ENCODE measurements at regions of chr2 and their contacts with region 1.

Region 1: GRCh38 chr2:20650880-20651730 is at the start of gene HS1BP3:
- DNase-seq: peak; percentile 100
- H3K4me3 ChIP-seq: peak within 1 kb of the TSS; percentile 76 to 93
- H3K27ac ChIP-seq: peak within 1 kb of the TSS; percentile 48 to 91
- H3K4me1 ChIP-seq: peaks cover 13 to 18% of the 10 kb centered on the region in 2 experiments; a peak in 2 of 4 replicates
- H3K27me3 ChIP-seq: peaks cover 9% of the 10 kb centered on the region; the same call in 1 of the 2 replicates
- CTCF ChIP-seq: peak; percentile 66
- EP300 ChIP-seq: 0 out of 4 replicates have a peak, but pooled peaks of 1 of the 2 experiments have one; percentile 23
- RAD21 ChIP-seq: peak; percentile 59
- polyA plus RNA-seq, gene HS1BP3: 18.7 and 20.1 TPM in 2 replicates

Region 2: DNA sequence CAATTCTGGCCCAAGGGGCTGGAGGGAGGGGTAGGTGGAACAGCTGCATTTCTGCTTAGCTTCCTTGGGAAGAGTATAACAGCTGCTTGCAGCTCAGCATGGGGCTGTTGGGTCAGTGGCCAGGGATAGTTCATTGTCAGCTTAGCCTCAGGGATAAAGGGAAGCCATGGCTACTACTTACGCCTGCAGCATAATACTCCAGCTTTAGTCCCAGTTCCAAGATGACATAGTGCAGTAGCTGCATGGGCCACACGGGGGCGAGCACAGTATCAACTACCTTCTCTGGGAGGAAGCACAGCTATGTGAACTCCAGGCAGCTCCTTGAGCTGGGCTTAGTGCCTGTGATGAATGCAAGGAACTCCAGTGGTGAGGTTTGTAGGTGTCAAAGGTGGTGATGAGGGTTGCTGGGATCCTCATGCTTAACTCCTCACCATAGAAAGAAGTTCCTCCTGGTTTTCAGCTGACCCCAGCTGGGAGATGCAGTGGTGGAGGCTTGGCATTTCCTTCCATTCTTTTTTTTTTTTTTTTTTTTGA is 239.7 kb before region 1 on chr2:
- CTCF ChIA-PET with region 1: interaction called, 28 read pairs
- POLR2A ChIA-PET with region 1: no interaction called
- DNase-seq: peak; percentile 77
- H3K4me3 ChIP-seq: no peak overlapping the region
- H3K27ac ChIP-seq: no peak overlapping the region
- H3K4me1 ChIP-seq: no peaks in the 10 kb centered on the region
- H3K27me3 ChIP-seq: peaks cover 9% of the 10 kb centered on the region; the same call in 1 of the 2 replicates
- CTCF ChIP-seq: peak; percentile 87
- EP300 ChIP-seq: no peak
- RAD21 ChIP-seq: peak; percentile 70

Region 3: DNA sequence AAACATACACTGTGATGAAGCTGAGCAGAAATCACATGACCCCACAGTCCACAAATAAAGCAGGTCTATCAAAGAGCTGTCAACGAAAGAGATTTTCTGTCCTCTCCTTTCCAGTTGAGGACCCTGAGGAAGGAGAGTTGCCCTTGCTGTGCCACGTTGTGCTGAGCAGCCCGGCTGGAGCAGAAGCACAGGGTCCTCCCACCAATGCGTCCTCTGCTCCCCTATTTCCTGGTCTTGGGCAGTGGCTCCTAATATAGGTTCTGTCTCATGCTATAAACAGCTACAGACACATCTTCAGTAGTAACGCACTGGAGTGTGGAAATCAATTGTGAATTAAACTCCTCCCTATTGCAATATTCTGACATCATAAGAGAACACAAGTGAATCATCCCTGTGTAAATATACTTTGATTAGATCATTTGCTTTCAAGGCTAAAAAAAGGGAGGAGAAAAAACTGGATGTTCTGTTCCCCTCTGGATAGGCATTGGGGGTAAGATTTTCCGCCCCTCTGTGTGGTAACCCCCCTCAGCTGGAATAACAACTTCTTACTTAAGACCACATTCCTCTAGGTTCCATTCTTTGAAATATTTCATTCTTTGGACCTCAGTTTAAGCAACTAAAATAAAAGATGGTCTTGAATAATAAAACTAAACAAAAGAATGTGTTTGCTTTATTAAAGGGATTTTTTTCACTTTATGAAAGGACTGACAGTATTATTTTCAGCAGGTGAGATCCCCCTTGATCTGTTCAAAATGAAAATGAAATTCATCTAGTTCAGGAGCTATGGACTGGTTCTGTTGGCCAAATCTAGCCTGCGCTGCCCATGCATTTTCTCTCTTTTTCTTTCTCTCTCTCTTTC is 212.5 kb before region 1 on chr2:
- CTCF ChIA-PET with region 1: interaction called, 64 read pairs
- POLR2A ChIA-PET with region 1: no interaction called
- DNase-seq: no peak
- H3K4me3 ChIP-seq: no peak overlapping the region
- H3K27ac ChIP-seq: peak overlapping the region in 1 of 2 experiments; percentile 6; a peak in 1 of 4 replicates
- H3K4me1 ChIP-seq: peaks cover 2 to 6% of the 10 kb centered on the region in 2 experiments; a peak in 2 of 4 replicates
- H3K27me3 ChIP-seq: no peaks in the 10 kb centered on the region; the same call in 1 of the 2 replicates
- CTCF ChIP-seq: no peak
- EP300 ChIP-seq: no peak
- RAD21 ChIP-seq: no peak

Region 4: DNA sequence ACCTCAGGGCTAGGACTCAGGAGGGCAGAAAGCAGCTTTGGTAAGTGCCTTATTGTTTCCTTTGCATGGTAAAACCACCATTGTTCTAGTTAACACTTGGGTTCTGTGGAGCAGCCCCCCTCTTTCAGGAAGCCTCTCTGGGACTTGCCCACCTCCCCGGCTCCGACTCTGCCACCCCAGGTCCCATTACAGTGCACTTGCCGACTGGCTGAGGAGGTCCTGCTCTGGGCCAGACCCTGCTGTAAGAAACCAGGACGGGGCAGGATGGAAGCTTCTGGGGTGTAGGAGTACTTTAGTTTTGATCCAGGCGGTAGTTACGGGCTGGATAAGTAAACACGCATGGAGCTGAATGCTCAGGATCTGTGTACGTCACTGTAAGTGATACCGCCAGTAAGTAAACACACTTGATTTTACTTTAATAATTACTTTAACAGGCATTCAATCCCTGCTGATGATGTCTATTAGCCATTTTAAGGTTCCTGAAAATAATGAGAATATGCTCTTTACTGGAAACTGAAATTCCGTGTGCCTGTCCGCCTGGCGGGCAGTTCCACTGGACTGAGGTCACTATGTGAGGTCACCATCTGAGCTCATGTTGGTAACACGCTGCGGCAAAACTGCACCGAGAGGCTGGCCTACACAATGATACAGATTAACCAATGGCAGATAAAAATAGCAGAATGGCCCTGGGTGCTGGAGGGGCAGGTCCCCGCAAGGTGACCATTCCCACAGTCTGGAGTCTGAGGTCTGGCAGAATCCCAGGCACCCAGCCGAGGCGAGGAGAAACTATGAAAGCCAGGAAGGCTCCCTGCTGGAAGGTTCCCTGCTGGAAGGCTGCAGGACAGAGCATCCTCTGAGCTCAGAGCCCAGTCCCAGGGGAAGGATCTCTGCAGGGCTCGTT is 25.4 kb before region 1 on chr2:
- CTCF ChIA-PET with region 1: interaction called, 156 read pairs
- POLR2A ChIA-PET with region 1: no interaction called
- DNase-seq: no peak
- H3K4me3 ChIP-seq: no peak overlapping the region
- H3K27ac ChIP-seq: 0 out of 4 replicates have a peak overlapping the region, but pooled peaks of 1 of the 2 experiments have one; percentile 43
- H3K4me1 ChIP-seq: peaks cover 0 to 37% of the 10 kb centered on the region in 2 experiments; a peak in 1 of 4 replicates
- H3K27me3 ChIP-seq: no peaks in the 10 kb centered on the region
- CTCF ChIP-seq: no peak
- EP300 ChIP-seq: no peak
- RAD21 ChIP-seq: no peak

Region 5: DNA sequence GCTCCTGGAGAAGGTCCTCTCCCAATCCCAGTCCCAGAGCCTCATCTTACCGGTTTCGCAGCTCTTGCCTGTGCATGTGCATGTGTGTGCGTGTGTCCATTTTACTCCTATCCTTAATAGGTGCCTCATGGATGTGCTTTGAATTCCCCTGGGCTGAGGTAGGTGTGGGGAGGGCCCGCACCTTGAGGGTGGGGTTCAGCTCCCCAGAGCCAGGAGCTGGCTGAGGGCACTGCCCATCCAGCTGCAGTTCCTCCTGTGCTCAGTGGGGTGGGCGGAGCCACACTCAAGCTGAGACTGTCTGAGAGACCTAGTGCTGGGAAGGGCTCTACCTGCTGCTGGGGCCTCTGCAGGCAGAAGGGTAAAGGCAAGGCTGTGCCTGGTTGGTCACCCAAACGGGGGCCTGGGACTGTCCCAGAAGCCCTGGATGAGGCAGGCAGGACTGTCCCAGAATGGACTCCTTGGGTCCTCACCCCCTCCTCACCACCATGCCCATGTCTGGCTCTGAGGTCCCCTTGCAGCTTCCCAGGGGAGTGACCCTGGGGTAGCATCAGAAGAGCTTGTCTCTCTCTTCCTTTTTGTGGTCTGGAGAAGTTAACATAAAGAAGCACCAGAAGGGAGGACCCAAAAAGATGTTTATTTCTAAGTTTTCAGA is 24.7 kb after region 1 on chr2:
- CTCF ChIA-PET with region 1: interaction called, 21 read pairs
- POLR2A ChIA-PET with region 1: interaction called, 3 read pairs
- DNase-seq: no peak
- H3K4me3 ChIP-seq: no peak overlapping the region
- H3K27ac ChIP-seq: peak overlapping the region in 1 of 2 experiments; percentile 45; a peak in 1 of 4 replicates
- H3K4me1 ChIP-seq: peaks cover 5 to 12% of the 10 kb centered on the region in 2 experiments; a peak in 3 of 4 replicates
- H3K27me3 ChIP-seq: peaks cover 10% of the 10 kb centered on the region
- CTCF ChIP-seq: peak; percentile 5; the same call in 1 of the 2 replicates
- EP300 ChIP-seq: no peak
- RAD21 ChIP-seq: no peak

Region 6: DNA sequence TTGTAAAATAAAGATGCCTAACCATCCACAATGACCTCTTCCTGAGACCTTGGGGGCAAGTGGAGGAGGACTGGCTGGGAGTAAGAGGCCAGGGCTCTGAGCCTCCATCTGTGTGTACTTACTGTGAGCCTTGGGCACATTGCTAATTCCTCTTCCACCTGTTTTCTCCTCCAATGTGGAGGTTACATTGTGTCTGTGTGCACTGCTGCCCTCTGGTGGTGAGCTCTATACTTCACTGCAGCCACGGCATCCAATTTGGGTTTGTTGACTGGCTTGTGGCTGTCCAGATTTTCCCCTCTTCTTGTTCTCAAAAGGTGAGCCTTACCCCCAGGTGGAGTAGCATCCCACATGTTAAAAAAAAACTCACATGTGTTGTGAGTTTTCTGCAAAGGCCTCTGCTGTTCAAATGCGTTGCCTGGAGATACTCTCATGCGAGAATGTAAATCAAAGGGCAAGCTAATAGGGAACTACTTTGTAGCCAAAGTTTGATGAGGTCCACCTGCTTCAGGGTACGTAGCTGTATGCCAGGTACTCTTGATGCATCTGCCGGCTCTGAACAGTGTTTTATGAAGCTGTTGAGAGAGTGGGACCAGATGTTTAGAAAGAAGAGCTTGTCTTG is 311.9 kb after region 1 on chr2:
- CTCF ChIA-PET with region 1: interaction called, 26 read pairs
- POLR2A ChIA-PET with region 1: no interaction called
- DNase-seq: peak; percentile 84
- H3K4me3 ChIP-seq: no peak overlapping the region; a peak in 1 of 4 replicates
- H3K27ac ChIP-seq: no peak overlapping the region
- H3K4me1 ChIP-seq: no peaks in the 10 kb centered on the region; a peak in 1 of 4 replicates
- H3K27me3 ChIP-seq: peaks cover 14% of the 10 kb centered on the region; the same call in 1 of the 2 replicates
- CTCF ChIP-seq: peak; percentile 98
- EP300 ChIP-seq: no peak
- RAD21 ChIP-seq: peak; percentile 97

Measured in SK-N-SH (cell line).